B cell (primary cell): ENCODE measurements at regions of chr9 and their contacts with region 1.

Region 1: GRCh38 chr9:34899535-34900158 is 58.4 kb upstream of the PHF24 start:
- DNase-seq: peak; percentile 85
- ATAC-seq: peak; percentile 97
- H3K4me3 ChIP-seq: no peak overlapping the region
- H3K4me3 Mint-ChIP-seq: no peak overlapping the region
- H3K27ac ChIP-seq: no peak overlapping the region
- H3K27ac Mint-ChIP-seq: no peak overlapping the region
- H3K4me1 ChIP-seq: no peaks in the 10 kb centered on the region
- H3K4me1 Mint-ChIP-seq: no peaks in the 10 kb centered on the region
- H3K27me3 ChIP-seq: peaks cover 0 to 11% (median 9%) of the 10 kb centered on the region in 4 experiments
- H3K27me3 Mint-ChIP-seq: peaks cover 31% of the 10 kb centered on the region
- CTCF ChIP-seq: peak; percentile 94

Region 2: GRCh38 chr9:34989003-34989945 is 89.6 kb after region 1 on chr9 and contains the start of gene DNAJB5:
- CTCF ChIA-PET with region 1: interaction called, 61 read pairs
- POLR2A ChIA-PET with region 1: interaction called, 7 read pairs
- intact Hi-C with region 1: loop called (anchors 1 kb)
- DNase-seq: peak; percentile 98
- ATAC-seq: peak; percentile 96
- H3K4me3 ChIP-seq: peak within 1 kb of the TSS; percentile 74 to 95 (median 84)
- H3K4me3 Mint-ChIP-seq: peak within 1 kb of the TSS; percentile 94
- H3K27ac ChIP-seq: peak within 1 kb of the TSS; percentile 11 to 68
- H3K27ac Mint-ChIP-seq: peak within 1 kb of the TSS; percentile 78
- H3K4me1 ChIP-seq: peaks cover 42 to 51% of the 10 kb centered on the region in 2 donors
- H3K4me1 Mint-ChIP-seq: peaks cover 45% of the 10 kb centered on the region
- H3K27me3 ChIP-seq: no peaks in the 10 kb centered on the region
- H3K27me3 Mint-ChIP-seq: no peaks in the 10 kb centered on the region
- CTCF ChIP-seq: no peak
- total RNA-seq, gene DNAJB5: 1.0 and 2.4 TPM in 2 replicates

Region 3: DNA sequence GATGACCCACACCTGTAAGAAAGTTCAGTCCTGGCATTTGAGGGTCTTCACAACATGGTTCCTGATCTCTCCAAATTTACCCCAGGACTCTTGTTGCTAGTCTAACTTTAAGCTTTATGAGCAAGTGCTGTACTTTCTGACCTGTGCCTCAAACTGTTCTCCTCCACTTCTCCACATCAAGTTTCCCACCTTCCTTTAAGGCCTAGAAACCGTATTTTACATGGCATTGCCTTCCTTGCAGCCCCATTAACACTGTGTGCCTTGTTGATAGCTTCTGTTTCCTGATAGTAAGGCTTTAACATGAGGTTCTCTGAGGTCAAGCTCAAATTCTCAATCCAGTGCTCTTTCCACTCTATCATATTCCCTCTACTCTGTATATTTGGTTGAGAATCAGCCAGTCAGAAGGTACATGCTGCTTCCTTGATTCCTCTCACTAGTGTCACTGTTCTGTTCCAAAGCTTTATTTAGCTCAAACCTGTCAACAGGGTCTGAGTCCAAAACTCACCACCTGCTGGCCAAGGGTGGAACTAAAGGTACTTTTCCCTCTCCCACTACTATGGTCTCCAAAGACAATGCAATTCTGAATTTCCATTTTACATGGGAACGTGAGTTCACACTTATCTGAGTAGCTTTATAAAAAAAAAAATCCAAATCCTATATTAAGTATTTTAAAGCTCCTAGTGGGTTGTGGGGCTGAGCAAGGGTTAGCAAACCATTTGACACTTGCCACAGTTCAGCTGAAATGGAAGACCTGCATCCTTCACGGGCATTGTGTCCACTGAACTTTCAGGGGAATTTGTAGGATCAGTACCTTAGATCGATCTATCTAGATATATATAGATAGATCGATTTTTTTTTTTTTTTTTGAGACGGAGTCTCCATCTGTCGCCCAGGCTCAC is 151.7 kb after region 1 on chr9:
- CTCF ChIA-PET with region 1: interaction called, 84 read pairs
- POLR2A ChIA-PET with region 1: interaction called, 4 read pairs
- intact Hi-C with region 1: loop called (anchors 1 kb)
- DNase-seq: peak; percentile 63
- ATAC-seq: peak; percentile 51
- H3K4me3 ChIP-seq: no peak overlapping the region
- H3K4me3 Mint-ChIP-seq: no peak overlapping the region
- H3K27ac ChIP-seq: no peak overlapping the region
- H3K27ac Mint-ChIP-seq: peak overlapping the region; percentile 0
- H3K4me1 ChIP-seq: no peaks in the 10 kb centered on the region
- H3K4me1 Mint-ChIP-seq: peaks cover 4% of the 10 kb centered on the region
- H3K27me3 ChIP-seq: no peaks in the 10 kb centered on the region
- H3K27me3 Mint-ChIP-seq: no peaks in the 10 kb centered on the region
- CTCF ChIP-seq: peak; percentile 80

Region 4: DNA sequence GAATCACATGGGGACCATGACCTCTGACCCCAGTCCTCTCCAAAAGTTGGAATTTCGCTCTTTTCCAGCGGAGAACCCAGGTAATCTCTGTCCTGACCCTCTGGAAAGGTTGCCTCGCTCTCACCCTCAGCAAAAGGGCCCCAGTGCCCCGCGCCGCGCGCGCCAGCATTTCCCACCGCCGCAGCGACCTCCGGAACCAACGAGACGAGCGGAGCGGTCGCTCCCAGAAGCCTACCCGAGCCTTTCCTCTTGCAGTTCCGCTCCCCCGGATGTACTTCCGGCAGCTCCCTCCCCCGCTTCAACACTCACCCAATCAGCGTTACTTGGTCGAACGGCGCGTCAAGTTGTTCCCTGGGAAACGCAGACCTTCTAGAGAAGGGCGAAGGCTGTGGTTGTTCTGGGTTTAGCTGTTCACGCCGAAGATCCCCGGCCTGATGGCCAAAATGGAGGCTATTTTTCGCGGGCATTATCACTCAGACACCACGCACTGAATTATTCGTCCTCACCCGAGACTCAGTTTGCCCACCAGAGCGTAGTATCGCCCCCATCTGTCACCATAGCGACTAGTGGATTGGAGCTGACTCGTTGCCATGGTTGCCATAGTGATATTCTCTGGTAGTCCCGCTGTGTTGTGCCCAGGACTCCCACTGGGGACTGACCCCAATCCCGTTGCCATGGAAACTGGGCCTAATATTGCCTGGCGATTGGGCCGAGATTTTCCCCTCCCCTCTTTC is 203.4 kb after region 1 on chr9 and contains the start of gene STOML2:
- CTCF ChIA-PET with region 1: interaction called, 61 read pairs
- POLR2A ChIA-PET with region 1: no interaction called
- intact Hi-C with region 1: no loop called
- DNase-seq: peak; percentile 95
- ATAC-seq: peak; percentile 95
- H3K4me3 ChIP-seq: peak within 1 kb of the TSS; percentile 61 to 94 (median 88)
- H3K4me3 Mint-ChIP-seq: peak within 1 kb of the TSS; percentile 86
- H3K27ac ChIP-seq: peak within 1 kb of the TSS; percentile 86 to 96
- H3K27ac Mint-ChIP-seq: peak within 1 kb of the TSS; percentile 97
- H3K4me1 ChIP-seq: peaks cover 13 to 22% of the 10 kb centered on the region in 2 donors
- H3K4me1 Mint-ChIP-seq: peaks cover 28% of the 10 kb centered on the region
- H3K27me3 ChIP-seq: no peaks in the 10 kb centered on the region
- H3K27me3 Mint-ChIP-seq: no peaks in the 10 kb centered on the region
- CTCF ChIP-seq: no peak
- total RNA-seq, gene STOML2: 52.1 and 58.9 TPM in 2 replicates

Region 5: DNA sequence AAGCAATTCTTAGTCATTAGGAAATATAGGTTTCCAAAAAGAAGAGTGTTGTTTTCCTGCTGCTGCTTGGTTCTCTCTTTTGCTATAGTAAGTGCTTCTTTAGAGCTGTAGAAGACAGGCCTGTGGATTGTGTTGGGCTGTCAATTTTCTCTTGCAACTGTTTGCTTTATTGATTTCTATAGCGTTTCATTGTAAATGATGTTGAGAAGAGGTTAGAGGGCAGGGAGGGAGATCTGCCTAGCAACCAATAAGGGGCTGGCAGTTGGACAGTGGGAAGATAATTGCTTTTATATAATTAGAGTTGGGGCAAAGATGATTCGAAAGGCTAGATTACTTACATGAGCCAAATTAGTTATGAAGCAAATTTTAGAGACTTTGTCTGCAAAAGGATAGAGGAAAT is 273.2 kb after region 1 on chr9:
- CTCF ChIA-PET with region 1: no interaction called
- POLR2A ChIA-PET with region 1: no interaction called
- intact Hi-C with region 1: no loop called
- DNase-seq: no peak
- ATAC-seq: no peak
- H3K4me3 ChIP-seq: no peak overlapping the region
- H3K4me3 Mint-ChIP-seq: no peak overlapping the region
- H3K27ac ChIP-seq: no peak overlapping the region
- H3K27ac Mint-ChIP-seq: no peak overlapping the region
- H3K4me1 ChIP-seq: no peaks in the 10 kb centered on the region
- H3K4me1 Mint-ChIP-seq: no peaks in the 10 kb centered on the region
- H3K27me3 ChIP-seq: peaks cover 0 to 3% (median 0%) of the 10 kb centered on the region in 4 experiments
- H3K27me3 Mint-ChIP-seq: peaks cover 12% of the 10 kb centered on the region
- CTCF ChIP-seq: no peak

Region 6: DNA sequence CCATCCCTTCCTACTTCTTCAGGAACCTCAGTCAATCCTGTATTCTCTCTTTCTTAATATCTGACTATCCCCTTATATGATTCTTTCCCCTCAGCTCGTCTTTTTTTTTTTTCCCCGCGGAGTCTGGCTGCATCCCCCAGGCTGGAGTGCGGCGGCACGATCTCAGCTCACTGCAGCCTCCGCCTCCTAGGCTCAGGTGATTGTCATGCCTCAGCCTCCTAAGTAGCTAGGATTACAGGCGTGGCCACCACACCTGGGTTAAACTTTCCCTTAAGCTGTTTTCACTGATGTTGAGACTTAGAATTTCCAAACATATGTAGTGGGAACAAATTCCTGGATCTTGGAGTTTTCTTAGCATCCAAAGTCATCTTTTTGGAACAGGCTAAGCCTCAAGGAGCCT is 576.9 kb after region 1 on chr9:
- CTCF ChIA-PET with region 1: interaction called, 109 read pairs
- POLR2A ChIA-PET with region 1: no interaction called
- intact Hi-C with region 1: no loop called
- DNase-seq: no peak
- ATAC-seq: no peak
- H3K4me3 ChIP-seq: no peak overlapping the region
- H3K4me3 Mint-ChIP-seq: no peak overlapping the region
- H3K27ac ChIP-seq: no peak overlapping the region
- H3K27ac Mint-ChIP-seq: no peak overlapping the region
- H3K4me1 ChIP-seq: no peaks in the 10 kb centered on the region
- H3K4me1 Mint-ChIP-seq: no peaks in the 10 kb centered on the region
- H3K27me3 ChIP-seq: peaks cover 0 to 21% (median 0%) of the 10 kb centered on the region in 4 experiments
- H3K27me3 Mint-ChIP-seq: peaks cover 23% of the 10 kb centered on the region
- CTCF ChIP-seq: no peak